ENCODE measurements at regions of chr22 and their contacts with region 1.

Region 1: GRCh38 chr22:46791201-46791731 is 28.8 kb downstream of the TBC1D22A start:
- DNase-seq: peak; percentile 92
- H3K4me3 Mint-ChIP-seq: peak overlapping the region; percentile 82
- H3K27ac Mint-ChIP-seq: peak overlapping the region; percentile 100
- H3K4me1 Mint-ChIP-seq: peaks cover 38% of the 10 kb centered on the region
- H3K27me3 Mint-ChIP-seq: no peaks in the 10 kb centered on the region

Region 2: GRCh38 chr22:46774253-46774979 is 16.9 kb before region 1 on chr22:
- intact Hi-C with region 1: loop called (anchors 1 kb)
- DNase-seq: no peak
- H3K4me3 Mint-ChIP-seq: peak overlapping the region; percentile 74
- H3K27ac Mint-ChIP-seq: peak overlapping the region; percentile 86
- H3K4me1 Mint-ChIP-seq: peaks cover 63% of the 10 kb centered on the region
- H3K27me3 Mint-ChIP-seq: no peaks in the 10 kb centered on the region